AG04449 (cell line): ENCODE measurements at regions of chr20 and their contacts with region 1.

Region 1: DNA sequence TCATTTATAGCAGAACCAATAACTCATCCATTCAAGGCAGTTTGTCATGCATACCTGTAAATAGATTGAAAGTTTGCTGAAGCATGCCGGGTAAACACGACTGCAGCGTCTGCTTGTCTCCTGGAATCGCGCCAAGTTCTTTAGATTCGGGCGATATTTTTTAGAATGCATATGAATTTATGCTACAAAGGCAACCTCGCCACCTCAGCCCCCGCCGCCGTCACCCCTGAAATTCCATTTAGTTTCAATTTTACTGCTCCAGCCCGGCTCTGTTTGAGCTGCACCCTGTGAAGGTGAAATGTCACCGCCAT is 17.3 kb upstream of the CDH4 start:
- DNase-seq: no peak
- H3K4me3 ChIP-seq: no peak overlapping the region
- CTCF ChIP-seq: no peak

Region 2: DNA sequence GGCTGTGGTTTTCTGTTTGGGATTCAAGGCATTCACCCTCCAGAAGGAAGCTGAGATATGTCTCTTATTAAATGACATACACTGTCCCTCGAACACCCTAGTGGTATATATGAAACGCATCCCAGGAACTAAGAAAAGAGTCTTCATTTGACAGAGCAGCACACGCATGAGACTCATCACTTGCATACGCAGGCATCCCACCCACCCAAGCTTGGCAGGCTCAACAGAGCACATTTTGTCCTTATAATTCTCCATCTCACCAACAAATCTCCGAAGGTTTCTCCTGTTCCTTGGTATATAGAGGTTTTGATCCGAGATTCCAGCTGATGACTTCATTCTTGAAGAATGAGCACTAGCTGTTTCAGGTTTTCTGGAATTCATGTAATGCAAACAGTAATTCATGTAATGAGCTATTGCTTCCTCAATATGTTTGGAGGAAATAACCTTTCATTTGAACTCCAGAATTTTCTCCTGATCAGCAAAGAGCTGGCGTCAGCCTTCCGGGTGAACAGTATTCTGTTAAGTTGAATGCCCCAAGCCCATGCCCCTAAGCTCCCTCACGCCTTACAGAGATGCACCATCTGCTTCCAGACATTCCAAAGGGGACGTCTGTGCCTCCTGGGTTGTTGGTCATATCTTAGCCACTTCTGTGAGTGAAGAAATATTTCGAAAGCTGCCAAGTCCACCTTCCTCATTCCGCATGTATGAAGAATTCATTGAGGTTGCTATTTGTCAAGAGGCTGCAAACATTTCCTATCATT is 48.7 kb before region 1 on chr20:
- CTCF ChIA-PET with region 1: interaction called, 14 read pairs
- POLR2A ChIA-PET with region 1: no interaction called
- DNase-seq: peak; percentile 86
- H3K4me3 ChIP-seq: peak overlapping the region; percentile 13; the same call in 1 of the 2 replicates
- CTCF ChIP-seq: no peak

Region 3: GRCh38 chr20:61210862-61211261 is 23.9 kb before region 1 on chr20:
- CTCF ChIA-PET with region 1: interaction called, 22 read pairs
- POLR2A ChIA-PET with region 1: no interaction called
- DNase-seq: no peak
- H3K4me3 ChIP-seq: no peak overlapping the region
- CTCF ChIP-seq: no peak

Region 4: GRCh38 chr20:61219021-61219431 is 15.7 kb before region 1 on chr20:
- CTCF ChIA-PET with region 1: interaction called, 22 read pairs
- POLR2A ChIA-PET with region 1: no interaction called
- DNase-seq: peak; percentile 21
- H3K4me3 ChIP-seq: no peak overlapping the region
- CTCF ChIP-seq: no peak

Region 5: DNA sequence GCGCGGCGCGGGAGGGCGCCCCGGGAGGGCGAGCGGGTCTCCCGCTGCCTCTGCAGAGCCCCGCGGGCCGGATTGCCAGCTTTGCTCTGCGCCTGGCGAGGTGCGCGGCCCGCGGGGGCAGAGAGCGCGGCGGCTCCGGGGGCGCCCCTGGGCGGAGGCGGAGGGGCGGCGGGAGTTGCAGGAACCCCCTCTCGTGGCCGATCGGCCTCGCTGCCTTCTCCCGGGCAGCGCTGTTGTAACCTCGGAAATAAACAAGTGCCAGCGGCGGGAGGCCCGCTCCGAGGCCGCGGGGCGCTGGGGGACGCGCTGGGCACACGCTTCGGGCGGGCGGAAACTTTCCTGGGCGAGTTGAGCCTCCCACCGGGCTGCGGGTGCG is 18.5 kb after region 1 on chr20:
- CTCF ChIA-PET with region 1: interaction called, 21 read pairs
- POLR2A ChIA-PET with region 1: no interaction called
- DNase-seq: no peak
- H3K4me3 ChIP-seq: peak overlapping the region; percentile 53
- CTCF ChIP-seq: peak; percentile 59